Activated CD4-positive, alpha-beta T cell treated with anti-CD3 and anti-CD28 coated beads, Interleukin-2, amount 10 ng/mL, durations not matched to agents 24 days and 14 days (primary cell): ENCODE measurements at regions of chr14 and their contacts with region 1.

Region 1: DNA sequence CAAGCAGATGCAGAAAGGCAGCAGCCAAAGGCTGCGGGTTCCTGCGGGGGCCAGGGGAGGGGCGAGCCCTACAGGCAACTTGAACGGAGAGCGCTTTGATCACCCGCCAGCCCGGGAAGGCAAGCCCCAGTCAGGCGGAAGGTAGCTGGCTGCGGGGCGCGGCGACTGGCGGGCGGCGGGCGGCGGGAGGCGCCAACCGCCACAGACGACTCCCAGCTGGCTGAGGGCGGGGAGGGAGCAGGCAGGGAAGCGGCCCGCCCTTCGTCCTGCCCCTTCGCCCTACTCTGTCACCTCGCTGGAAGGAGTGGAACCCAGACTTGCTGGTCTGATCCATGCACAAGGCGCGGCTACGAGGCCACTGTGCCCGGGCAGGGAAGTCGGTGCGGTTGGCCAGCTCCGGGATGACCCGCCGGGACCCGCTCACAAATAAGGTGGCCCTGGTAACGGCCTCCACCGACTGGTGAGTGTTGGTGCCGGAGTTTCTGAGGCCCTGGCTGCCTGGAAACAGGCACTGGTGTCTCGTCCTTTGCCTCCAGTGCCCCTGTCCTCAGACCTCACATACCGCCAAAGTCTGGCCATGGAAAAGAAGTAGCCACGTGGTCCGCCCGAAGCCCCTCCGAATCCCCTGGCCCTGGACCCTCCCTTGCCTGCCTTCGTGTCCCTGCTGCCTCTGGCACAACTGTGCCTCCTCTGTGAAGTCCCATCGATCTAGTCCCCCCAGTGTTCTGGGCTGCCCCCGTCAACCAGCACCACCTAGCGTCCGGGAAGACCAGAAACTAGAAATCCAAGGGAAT is 15.4 kb upstream of the CARMIL3 start:
- DNase-seq: peak; percentile 91
- H3K4me3 Mint-ChIP-seq: peak overlapping the region; percentile 91
- H3K27ac Mint-ChIP-seq: peak overlapping the region; percentile 87
- H3K4me1 Mint-ChIP-seq: peaks cover 13% of the 10 kb centered on the region
- H3K27me3 Mint-ChIP-seq: peaks cover 3% of the 10 kb centered on the region

Region 2: DNA sequence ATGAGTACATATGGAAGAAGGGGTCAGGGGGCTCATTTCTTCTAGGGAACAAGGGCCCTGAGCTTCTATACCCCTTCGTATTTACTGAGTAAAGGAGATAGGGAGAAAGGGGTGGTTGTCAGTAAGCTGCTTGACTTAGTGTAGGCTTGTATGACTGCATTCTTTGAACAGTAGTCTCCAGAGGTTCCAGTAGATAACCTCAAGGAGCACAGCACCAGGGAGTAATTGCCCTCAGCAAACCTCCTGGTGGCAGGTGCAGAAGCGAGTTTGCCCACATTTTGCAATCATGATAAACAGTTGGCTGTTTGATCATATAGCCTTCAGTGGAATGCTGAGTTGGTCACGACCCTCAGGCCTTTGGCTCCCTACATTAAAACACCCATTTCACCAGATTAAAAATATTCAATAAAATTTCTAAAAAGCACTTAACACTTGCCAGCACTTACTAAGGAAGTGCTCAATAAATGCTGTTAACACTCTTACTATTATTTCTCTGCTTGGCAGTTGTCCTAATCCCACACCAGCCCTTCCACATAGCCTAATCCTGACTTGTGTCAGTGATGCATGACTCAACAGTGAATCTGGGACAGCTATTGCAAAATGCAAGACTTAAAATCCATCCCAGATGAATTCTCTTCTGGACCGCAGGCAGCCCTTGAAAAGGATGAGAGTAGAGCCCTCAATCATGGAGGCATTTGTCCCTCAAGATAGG is 51.3 kb before region 1 on chr14:
- intact Hi-C with region 1: loop called (anchors 5 kb)
- DNase-seq: no peak
- H3K4me3 Mint-ChIP-seq: no peak overlapping the region
- H3K27ac Mint-ChIP-seq: no peak overlapping the region
- H3K4me1 Mint-ChIP-seq: peaks cover 26% of the 10 kb centered on the region
- H3K27me3 Mint-ChIP-seq: no peaks in the 10 kb centered on the region

Region 3: GRCh38 chr14:24013654-24014514 is 22.5 kb before region 1 on chr14:
- intact Hi-C with region 1: loop called (anchors 1 kb)
- DNase-seq: peak; percentile 90
- H3K4me3 Mint-ChIP-seq: no peak overlapping the region
- H3K27ac Mint-ChIP-seq: no peak overlapping the region
- H3K4me1 Mint-ChIP-seq: peaks cover 22% of the 10 kb centered on the region
- H3K27me3 Mint-ChIP-seq: peaks cover 18% of the 10 kb centered on the region

Region 4: GRCh38 chr14:24080888-24081738 is 44.7 kb after region 1 on chr14:
- intact Hi-C with region 1: no loop called
- DNase-seq: peak; percentile 93
- H3K4me3 Mint-ChIP-seq: peak overlapping the region; percentile 84
- H3K27ac Mint-ChIP-seq: peak overlapping the region; percentile 78
- H3K4me1 Mint-ChIP-seq: peaks cover 16% of the 10 kb centered on the region
- H3K27me3 Mint-ChIP-seq: peaks cover 6% of the 10 kb centered on the region

Region 5: DNA sequence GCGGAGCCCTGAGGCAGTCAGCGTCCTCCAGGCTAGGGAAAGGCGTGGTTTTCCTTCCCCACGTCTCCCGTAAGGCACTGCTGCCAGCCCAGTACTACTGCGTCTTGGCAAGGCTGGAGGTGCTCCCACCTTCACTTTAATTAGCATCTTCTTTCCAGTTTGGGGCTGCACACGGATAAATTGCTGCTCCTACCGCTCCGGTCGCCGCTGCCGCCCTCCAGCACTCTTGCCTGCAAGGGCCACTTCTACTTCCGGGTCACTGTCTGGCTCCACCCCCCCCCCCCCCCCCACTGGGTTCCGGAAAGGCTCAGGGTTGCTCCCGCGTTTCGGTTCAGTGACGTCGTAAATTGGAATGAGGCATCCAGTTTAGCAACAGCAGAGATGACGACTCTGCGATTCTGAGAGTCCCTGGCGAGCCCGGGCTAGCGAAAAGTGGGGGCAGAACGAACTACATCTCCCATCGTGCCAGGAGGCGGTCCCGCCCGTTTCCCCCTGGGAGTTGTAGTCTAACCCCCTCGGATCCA is 195.8 kb after region 1 on chr14 and contains the start of gene NEDD8:
- intact Hi-C with region 1: no loop called
- DNase-seq: peak; percentile 96
- H3K4me3 Mint-ChIP-seq: peak within 1 kb of the TSS; percentile 92
- H3K27ac Mint-ChIP-seq: peak within 1 kb of the TSS; percentile 92
- H3K4me1 Mint-ChIP-seq: peaks cover 41% of the 10 kb centered on the region
- H3K27me3 Mint-ChIP-seq: no peaks in the 10 kb centered on the region
- total RNA-seq, gene NEDD8: 188 and 190 TPM in 2 replicates